AG04449 (cell line): ENCODE measurements at regions of chr14 and their contacts with region 1.

Region 1: DNA sequence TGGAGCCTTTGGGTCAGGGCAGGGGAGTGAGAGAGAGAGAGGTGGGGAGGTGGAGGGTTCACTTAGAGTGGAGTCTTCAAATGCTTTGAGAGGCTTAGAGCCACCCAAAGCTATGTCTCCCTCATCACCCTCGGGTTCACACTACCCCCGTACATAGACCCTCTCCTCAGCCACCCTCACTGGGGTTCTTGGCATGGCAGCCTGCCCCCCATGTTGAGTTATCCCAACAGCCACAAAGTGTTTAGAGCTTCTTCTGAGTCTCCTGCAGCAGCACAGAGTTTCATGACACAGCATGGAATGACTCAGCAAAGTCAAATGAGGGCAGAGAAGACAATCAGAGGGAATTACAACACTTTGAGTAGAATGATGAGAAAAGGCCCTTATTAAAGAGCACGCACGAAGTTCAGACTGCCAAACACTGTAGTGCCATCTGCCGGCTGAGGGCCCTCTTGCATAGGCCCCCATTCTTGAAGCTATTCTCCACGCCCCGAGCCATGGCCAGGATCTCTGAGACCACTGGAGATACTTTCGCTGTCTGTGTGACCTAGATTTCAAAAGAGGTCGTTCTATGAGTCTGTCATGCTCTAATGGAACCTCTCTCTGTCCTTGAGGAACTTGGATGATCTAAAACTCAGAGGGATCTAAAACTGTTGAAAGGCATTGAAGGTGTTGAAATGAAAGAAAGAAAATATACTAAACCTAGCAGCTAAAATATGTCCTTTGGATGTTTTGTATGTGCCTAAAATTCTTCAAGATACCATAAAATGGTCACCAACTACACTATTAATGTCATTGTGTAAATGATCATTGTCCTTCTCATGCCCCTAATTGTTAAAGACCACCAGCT is 221.9 kb downstream of the PELI2 start:
- DNase-seq: peak; percentile 87
- H3K4me3 ChIP-seq: no peak overlapping the region
- CTCF ChIP-seq: peak; percentile 93

Region 2: GRCh38 chr14:55572578-55572977 is 767.5 kb before region 1 on chr14:
- CTCF ChIA-PET with region 1: no interaction called
- POLR2A ChIA-PET with region 1: no interaction called
- DNase-seq: no peak
- H3K4me3 ChIP-seq: no peak overlapping the region
- CTCF ChIP-seq: no peak

Region 3: GRCh38 chr14:55707365-55707804 is 632.7 kb before region 1 on chr14:
- CTCF ChIA-PET with region 1: interaction called, 15 read pairs
- POLR2A ChIA-PET with region 1: no interaction called
- DNase-seq: peak; percentile 23
- H3K4me3 ChIP-seq: no peak overlapping the region
- CTCF ChIP-seq: peak; percentile 54

Region 4: DNA sequence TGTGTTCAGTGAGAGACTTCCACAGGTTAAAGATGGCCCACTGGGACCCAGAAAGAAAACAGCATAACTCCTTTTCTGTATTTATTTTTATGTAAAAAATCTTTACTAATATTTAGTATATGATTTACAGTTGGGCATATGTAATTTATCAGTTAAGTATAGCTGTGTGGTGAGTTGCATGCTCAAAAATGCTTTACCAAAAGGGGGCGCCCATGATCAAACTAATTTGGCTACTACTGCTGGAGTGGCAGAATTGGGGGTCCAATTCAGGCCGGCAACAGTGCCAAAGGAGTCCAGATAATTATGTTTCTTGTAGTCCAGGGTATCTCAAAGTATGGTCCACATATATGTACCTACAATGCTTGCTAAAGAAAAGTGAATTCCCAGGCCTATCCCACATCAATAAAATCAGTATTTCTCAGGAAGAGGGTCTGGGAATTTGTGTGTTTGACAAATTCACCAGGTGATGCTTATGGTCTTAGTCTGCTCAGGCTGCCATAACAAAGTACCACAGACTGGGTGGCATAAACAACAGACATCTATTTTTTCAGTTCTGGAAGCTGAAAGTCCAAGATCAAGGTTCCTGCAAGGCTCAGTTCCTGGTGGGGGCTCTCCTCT is 608.1 kb before region 1 on chr14:
- CTCF ChIA-PET with region 1: interaction called, 23 read pairs
- POLR2A ChIA-PET with region 1: no interaction called
- DNase-seq: no peak
- H3K4me3 ChIP-seq: no peak overlapping the region
- CTCF ChIP-seq: peak; percentile 56

Region 5: DNA sequence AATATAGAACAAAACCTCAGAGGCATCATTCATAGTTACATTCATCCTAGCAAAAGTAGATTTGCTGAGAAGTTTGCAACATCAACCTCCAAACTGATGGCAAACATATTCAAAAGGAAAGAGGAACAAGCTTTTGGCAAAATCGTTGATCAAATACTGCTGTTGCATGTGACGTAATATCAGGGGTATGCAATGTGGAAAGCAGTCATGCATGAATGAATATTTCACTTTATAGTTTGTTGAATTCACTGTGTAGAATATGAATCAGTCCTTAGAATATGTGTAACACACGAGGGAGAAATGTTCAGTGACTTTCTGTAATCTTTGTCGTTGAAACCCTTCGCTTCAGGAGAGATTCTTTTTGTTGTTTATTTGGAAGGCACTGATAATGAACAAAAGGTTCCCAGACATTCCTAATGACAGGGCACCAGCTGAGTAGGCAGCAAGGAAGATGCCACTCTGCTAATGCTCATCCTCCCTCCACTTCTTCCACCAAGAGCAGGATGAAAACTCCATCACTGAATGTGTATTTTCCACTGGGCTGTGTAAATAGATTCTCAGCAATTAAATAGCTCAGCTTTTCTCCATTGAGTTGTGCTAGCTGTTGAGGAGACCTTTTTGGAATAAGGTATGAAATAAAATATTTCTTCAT is 95.8 kb before region 1 on chr14:
- CTCF ChIA-PET with region 1: interaction called, 12 read pairs
- POLR2A ChIA-PET with region 1: no interaction called
- DNase-seq: peak; percentile 68
- H3K4me3 ChIP-seq: peak overlapping the region; percentile 32
- CTCF ChIP-seq: no peak

Region 6: DNA sequence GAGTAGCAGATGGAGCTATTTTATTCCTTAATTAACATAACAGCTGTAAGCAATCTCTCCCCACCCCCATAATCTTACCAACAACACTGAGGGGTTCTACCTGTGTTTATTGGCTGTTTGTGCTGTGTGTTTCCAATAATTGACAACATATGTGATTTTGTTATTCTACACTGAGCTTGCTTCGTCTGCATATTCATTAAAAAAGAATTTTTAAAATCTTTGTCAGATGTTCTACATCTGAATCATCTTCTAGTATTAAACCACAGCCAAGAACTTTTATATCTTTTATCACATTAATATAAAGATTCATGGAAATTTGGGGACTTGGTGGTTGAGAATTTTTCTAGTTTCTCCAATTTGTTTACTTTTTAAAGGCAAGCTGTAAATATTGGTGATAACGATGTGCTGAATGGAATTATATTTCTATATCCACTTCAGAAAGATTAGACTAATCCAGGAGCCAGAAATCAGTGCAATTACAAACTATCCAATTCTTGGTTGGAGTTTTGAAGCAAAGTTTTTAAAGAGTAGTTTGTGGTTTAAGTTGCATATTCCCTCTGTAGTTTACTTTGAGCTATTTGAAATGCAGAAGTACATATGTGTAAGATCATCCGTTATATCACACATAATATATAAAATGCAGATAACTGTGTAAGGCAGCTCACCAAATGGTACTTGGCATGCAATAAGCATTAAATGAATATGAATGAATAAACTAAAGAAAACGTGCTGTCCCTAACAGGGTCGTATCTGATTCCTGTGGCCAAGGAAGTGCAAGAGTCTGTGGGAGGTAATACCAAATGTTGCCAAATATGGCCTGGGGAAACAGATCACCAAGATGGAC is 15.0 kb before region 1 on chr14:
- CTCF ChIA-PET with region 1: interaction called, 22 read pairs
- POLR2A ChIA-PET with region 1: interaction called, 3 read pairs
- DNase-seq: no peak
- H3K4me3 ChIP-seq: no peak overlapping the region
- CTCF ChIP-seq: no peak

Region 7: GRCh38 chr14:56474419-56475022 is 134.4 kb after region 1 on chr14:
- CTCF ChIA-PET with region 1: interaction called, 10 read pairs
- POLR2A ChIA-PET with region 1: no interaction called
- DNase-seq: no peak
- H3K4me3 ChIP-seq: no peak overlapping the region
- CTCF ChIP-seq: peak; percentile 51